ENCODE measurements at regions of chr2 and their contacts with region 1.

Region 1: DNA sequence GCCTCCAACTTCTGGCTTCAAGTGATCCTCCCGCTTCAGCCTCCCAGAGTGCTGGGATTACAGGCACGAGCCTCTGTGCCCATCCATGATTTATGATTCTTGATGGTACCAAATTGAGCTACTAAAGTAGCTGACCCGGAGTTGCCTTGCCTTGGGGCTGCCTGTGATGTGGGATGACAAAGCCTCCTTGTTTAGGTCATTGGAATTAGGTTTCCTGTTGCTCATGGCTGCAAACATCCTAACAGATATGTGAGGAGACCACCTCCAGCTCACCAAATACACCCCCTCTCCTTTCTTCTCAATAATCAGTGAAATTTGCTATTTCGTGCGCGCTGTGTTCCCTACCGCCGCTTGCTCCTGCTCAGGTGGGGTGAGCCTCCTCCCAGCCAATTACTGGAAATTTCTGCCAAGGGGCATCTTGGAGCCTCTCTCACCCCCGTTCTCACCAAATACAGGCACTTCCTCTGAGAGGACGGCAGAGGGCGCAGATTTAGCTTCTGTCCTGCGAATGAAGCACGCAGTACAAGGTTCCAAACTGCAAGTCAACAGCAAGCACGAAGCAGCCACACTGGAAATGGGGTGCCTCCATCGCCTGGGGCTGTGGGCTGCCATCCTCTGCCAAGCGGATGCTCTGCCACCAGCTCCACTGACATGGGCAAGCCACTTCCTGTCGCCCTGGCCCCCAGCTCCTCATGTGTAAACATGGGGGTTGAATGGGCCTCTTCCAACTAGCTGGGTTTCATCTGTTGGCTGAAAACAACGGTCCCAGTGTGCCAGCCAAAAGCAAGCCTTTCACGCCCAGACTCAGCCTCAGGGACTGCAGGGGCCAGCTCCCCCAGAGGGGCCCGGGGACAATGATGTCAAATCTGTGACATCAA is 71.7 kb downstream of the NCAPH start:
- DNase-seq: peak; percentile 68
- H3K4me3 ChIP-seq: no peak overlapping the region
- CTCF ChIP-seq: peak; percentile 81

Region 2: DNA sequence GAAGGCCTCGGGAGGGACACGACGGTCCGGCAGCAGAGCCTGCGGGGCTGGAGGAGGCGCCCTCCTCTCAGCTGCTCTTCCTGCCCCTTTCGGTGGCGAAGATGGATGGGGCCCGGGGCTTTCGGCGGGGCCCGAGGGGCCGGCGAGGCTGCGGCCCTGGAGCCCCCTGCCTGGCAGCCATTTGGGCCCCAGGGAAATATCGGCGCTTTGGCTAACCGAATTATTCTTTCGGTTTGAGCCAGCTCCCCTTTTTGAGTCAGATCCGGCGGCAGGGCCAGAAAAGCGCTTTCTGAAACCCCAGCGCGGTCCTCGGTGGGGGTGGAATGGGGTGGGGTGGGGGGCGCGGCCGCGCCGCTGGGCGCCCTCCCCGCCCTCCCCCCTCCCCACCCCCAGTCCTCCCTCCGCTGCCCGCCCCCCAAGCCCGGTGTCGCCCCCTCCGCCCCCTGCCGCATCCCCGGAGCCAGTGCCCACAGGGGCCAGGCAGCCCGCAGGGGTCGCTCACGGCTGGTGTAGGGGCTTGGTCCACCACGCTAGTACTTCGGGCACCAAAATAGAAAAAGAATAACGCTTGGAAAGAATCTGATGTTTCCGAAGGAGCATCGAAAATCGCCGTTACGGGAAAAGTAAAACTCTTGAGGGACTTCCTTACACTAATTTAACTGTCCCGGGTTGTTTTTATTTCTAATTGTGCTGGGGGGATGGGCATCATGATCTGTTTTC is 120.2 kb after region 1 on chr2:
- in situ Hi-C with region 1: loop called (anchors 10 kb)
- DNase-seq: no peak
- H3K4me3 ChIP-seq: peak overlapping the region; percentile 37
- CTCF ChIP-seq: peak; percentile 46

Measured in astrocyte of the cerebellum (primary cell).